HepG2 (cell line): ENCODE measurements at regions of chr5 and their contacts with region 1.

Region 1: DNA sequence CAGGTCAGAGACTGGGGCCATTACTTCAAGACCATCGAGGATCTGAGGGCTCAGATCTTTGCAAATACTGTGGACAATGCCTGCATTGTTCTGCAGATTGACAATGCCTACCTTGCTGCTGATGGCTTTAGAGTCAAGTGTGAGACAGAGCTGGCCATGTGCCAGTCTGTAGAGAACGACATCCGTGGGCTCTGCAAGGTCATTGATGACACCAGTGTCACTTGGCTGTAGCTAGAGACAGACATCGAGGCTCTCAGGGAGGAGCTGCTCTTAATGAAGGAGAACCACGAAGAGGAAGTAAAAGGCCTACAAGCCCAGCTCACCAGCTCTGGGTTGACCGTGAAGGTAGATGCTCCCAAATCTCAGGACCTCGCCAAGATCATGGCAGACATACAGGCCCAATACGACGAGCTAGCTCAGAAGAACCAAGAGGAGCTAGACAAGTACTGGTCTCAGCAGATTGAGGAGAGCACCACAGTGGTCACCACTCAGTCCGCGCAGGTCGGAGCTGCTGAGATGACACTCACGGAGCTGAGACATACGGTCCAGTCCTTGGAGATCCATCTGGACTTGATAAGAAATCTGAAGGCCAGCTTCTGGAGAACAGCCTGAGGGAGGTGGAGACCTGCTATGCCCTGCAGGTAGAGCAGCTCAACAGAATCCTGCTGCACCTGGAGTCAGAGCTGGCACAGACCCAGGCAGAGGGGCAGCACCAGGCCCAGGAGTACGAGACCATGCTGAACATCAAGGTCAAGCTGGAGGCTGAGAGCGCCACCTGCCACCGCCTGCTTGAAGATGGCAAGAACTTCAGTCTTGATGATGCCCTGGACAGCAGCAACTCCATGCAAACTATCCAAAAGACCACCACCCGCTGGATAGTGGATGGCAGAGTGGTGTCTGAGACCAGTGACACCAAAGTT is 9.3 kb downstream of the NIPBL start:
- DNase-seq: no peak
- ATAC-seq: no peak
- H3K4me3 ChIP-seq: no peak overlapping the region
- H3K27ac ChIP-seq: no peak overlapping the region
- H3K4me1 ChIP-seq: peaks cover 36% of the 10 kb centered on the region
- H3K27me3 ChIP-seq: no peaks in the 10 kb centered on the region
- CTCF ChIP-seq: no peak
- EP300 ChIP-seq: no peak
- POLR2A ChIP-seq: no peak
- RAD21 ChIP-seq: no peak

Region 2: GRCh38 chr5:36801521-36801920 is 84.3 kb before region 1 on chr5:
- CTCF ChIA-PET with region 1: no interaction called
- POLR2A ChIA-PET with region 1: no interaction called
- in situ Hi-C with region 1: no loop called
- intact Hi-C with region 1: no loop called
- DNase-seq: no peak
- ATAC-seq: no peak
- H3K4me3 ChIP-seq: no peak overlapping the region
- H3K27ac ChIP-seq: no peak overlapping the region
- H3K4me1 ChIP-seq: no peaks in the 10 kb centered on the region
- H3K27me3 ChIP-seq: no peaks in the 10 kb centered on the region
- CTCF ChIP-seq: no peak
- EP300 ChIP-seq: no peak
- POLR2A ChIP-seq: no peak
- RAD21 ChIP-seq: no peak

Region 3: GRCh38 chr5:36919650-36920049 is 33.8 kb after region 1 on chr5:
- CTCF ChIA-PET with region 1: no interaction called
- POLR2A ChIA-PET with region 1: no interaction called
- in situ Hi-C with region 1: no loop called
- intact Hi-C with region 1: loop called (anchors 1 kb)
- DNase-seq: no peak
- ATAC-seq: no peak
- H3K4me3 ChIP-seq: no peak overlapping the region
- H3K27ac ChIP-seq: no peak overlapping the region
- H3K4me1 ChIP-seq: no peaks in the 10 kb centered on the region
- H3K27me3 ChIP-seq: no peaks in the 10 kb centered on the region
- CTCF ChIP-seq: no peak
- EP300 ChIP-seq: no peak
- POLR2A ChIP-seq: no peak
- RAD21 ChIP-seq: no peak